ENCODE measurements at regions of chr20 and their contacts with region 1.

Region 1: GRCh38 chr20:14069796-14070195 is 74.5 kb downstream of the MACROD2 start:
- DNase-seq: no peak
- H3K4me3 ChIP-seq: no peak overlapping the region
- H3K27ac ChIP-seq: no peak overlapping the region
- H3K4me1 ChIP-seq: no peaks in the 10 kb centered on the region
- H3K27me3 ChIP-seq: no peaks in the 10 kb centered on the region
- CTCF ChIP-seq: no peak

Region 2: GRCh38 chr20:13852306-13852705 is 217.5 kb before region 1 on chr20:
- CTCF ChIA-PET with region 1: no interaction called
- POLR2A ChIA-PET with region 1: no interaction called
- intact Hi-C with region 1: no loop called
- DNase-seq: no peak
- H3K4me3 ChIP-seq: no peak overlapping the region
- H3K27ac ChIP-seq: no peak overlapping the region
- H3K4me1 ChIP-seq: no peaks in the 10 kb centered on the region
- H3K27me3 ChIP-seq: no peaks in the 10 kb centered on the region
- CTCF ChIP-seq: no peak

Region 3: DNA sequence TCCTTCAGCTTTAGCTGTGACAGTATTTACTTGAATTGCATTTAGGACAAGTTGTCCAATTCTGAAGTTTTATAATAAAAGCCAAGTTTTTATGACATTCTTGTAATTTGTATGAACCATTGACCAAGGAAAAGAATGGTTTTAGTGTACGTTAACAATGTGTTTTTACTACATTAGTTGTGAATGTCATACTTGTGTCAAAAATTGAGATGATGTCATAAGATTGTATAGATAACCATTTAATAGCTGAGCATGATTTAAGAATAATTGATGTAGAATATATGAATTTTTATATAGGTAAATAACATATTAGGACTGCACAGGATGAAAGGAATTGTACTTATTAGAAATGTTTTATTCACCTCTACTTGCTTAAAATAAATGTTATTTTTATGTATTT is 28.5 kb after region 1 on chr20:
- CTCF ChIA-PET with region 1: no interaction called
- POLR2A ChIA-PET with region 1: interaction called, 13 read pairs
- intact Hi-C with region 1: no loop called
- DNase-seq: no peak
- H3K4me3 ChIP-seq: no peak overlapping the region
- H3K27ac ChIP-seq: no peak overlapping the region
- H3K4me1 ChIP-seq: no peaks in the 10 kb centered on the region
- H3K27me3 ChIP-seq: no peaks in the 10 kb centered on the region
- CTCF ChIP-seq: no peak